SK-N-SH (cell line): ENCODE measurements at regions of chr2 and their contacts with region 1.

Region 1: GRCh38 chr2:10072656-10073480 is 7.3 kb downstream of the CYS1 start:
- DNase-seq: peak; percentile 97
- H3K4me3 ChIP-seq: no peak overlapping the region; a peak in 1 of 4 replicates
- H3K27ac ChIP-seq: no peak overlapping the region
- H3K4me1 ChIP-seq: peaks cover 0 to 2% of the 10 kb centered on the region in 2 experiments; a peak in 1 of 4 replicates
- H3K27me3 ChIP-seq: peaks cover 17% of the 10 kb centered on the region; the same call in 1 of the 2 replicates
- CTCF ChIP-seq: peak; percentile 96
- EP300 ChIP-seq: no peak
- RAD21 ChIP-seq: peak; percentile 91

Region 2: GRCh38 chr2:9821805-9822445 is 250.9 kb before region 1 on chr2:
- CTCF ChIA-PET with region 1: no interaction called
- POLR2A ChIA-PET with region 1: no interaction called
- DNase-seq: no peak
- H3K4me3 ChIP-seq: no peak overlapping the region
- H3K27ac ChIP-seq: no peak overlapping the region
- H3K4me1 ChIP-seq: peaks cover 0 to 2% of the 10 kb centered on the region in 2 experiments; a peak in 1 of 4 replicates
- H3K27me3 ChIP-seq: no peaks in the 10 kb centered on the region
- CTCF ChIP-seq: no peak
- EP300 ChIP-seq: no peak
- RAD21 ChIP-seq: no peak

Region 3: GRCh38 chr2:10003206-10004125 is 69.4 kb before region 1 on chr2:
- CTCF ChIA-PET with region 1: interaction called, 10 read pairs
- POLR2A ChIA-PET with region 1: no interaction called
- DNase-seq: no peak
- H3K4me3 ChIP-seq: no peak overlapping the region
- H3K27ac ChIP-seq: peak overlapping the region in 1 of 2 experiments; percentile 84; a peak in 2 of 4 replicates
- H3K4me1 ChIP-seq: peaks cover 0 to 53% of the 10 kb centered on the region in 2 experiments; a peak in 2 of 4 replicates
- H3K27me3 ChIP-seq: no peaks in the 10 kb centered on the region
- CTCF ChIP-seq: no peak
- EP300 ChIP-seq: no peak
- RAD21 ChIP-seq: no peak

Region 4: GRCh38 chr2:10057231-10058107 is 15.4 kb before region 1 on chr2:
- CTCF ChIA-PET with region 1: interaction called, 125 read pairs
- POLR2A ChIA-PET with region 1: no interaction called
- DNase-seq: peak; percentile 58
- H3K4me3 ChIP-seq: no peak overlapping the region
- H3K27ac ChIP-seq: no peak overlapping the region
- H3K4me1 ChIP-seq: peaks cover 0 to 23% of the 10 kb centered on the region in 2 experiments; a peak in 1 of 4 replicates
- H3K27me3 ChIP-seq: no peaks in the 10 kb centered on the region
- CTCF ChIP-seq: no peak
- EP300 ChIP-seq: no peak
- RAD21 ChIP-seq: no peak

Region 5: DNA sequence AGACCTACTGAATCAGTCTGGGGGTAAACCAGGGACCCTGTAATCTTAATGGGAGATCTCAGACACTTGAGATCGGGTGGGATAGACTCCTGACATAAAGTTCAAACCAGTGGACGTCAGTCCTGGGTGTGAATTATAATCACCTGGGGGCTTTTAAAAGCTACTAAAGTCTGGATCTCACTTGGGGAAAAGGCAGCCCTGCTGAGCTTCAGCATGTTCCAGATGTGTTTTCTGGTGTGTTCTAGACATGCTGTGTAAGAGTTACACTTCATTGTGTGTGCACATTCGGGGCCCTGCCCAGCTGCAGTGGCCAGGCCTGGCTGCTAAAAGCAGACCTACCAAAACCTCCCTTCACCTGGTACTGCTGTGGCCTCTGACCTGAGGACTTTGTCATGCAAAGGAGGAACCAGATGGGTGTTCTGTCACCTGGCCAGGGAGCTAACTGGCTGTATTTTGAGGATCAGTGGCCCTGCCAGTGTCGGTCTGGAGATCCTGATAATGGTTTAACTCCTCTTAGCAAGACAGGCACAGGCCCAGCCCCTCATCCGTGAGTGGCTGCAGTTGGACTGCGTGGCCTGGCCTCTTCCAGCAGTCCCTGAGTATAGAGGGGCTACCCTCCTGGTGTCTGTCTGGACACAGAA is 60.3 kb after region 1 on chr2:
- CTCF ChIA-PET with region 1: interaction called, 26 read pairs
- POLR2A ChIA-PET with region 1: no interaction called
- DNase-seq: no peak
- H3K4me3 ChIP-seq: no peak overlapping the region
- H3K27ac ChIP-seq: peak overlapping the region in 1 of 2 experiments; percentile 18; a peak in 1 of 4 replicates
- H3K4me1 ChIP-seq: peaks cover 0 to 16% of the 10 kb centered on the region in 2 experiments; a peak in 1 of 4 replicates
- H3K27me3 ChIP-seq: no peaks in the 10 kb centered on the region
- CTCF ChIP-seq: no peak
- EP300 ChIP-seq: no peak
- RAD21 ChIP-seq: no peak

Region 6: DNA sequence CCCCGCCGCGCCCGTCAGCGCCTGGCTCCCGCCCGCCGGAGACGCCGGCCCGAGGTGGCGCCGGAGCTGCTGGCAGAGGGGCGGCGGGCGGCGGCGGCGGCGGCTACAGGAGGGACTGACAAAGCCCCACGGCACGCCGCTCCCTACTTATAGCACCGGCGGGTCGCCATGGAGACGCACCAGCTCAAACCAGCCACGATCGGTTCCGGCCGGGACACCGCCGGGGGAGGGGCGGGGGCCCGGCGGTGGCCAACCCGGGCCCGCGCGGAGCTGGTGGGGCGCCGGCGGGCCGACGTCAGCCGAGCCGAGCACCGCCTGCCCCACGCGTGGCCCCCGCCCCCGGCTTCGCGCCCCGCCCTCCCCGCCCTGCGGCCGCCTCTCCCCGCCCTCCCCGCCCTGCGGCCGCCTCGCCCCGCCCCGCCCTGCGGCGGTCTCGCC is 375.4 kb after region 1 on chr2 and contains the start of gene ODC1:
- CTCF ChIA-PET with region 1: interaction called, 373 read pairs
- POLR2A ChIA-PET with region 1: interaction called, 4 read pairs
- DNase-seq: peak; percentile 99
- H3K4me3 ChIP-seq: peak within 1 kb of the TSS; percentile 76 to 88
- H3K27ac ChIP-seq: peak within 1 kb of the TSS; percentile 68 to 89
- H3K4me1 ChIP-seq: peaks cover 28 to 32% of the 10 kb centered on the region in 2 experiments
- H3K27me3 ChIP-seq: no peaks in the 10 kb centered on the region
- CTCF ChIP-seq: no peak
- EP300 ChIP-seq: peak in 1 of 2 experiments; percentile 18; a peak in 1 of 4 replicates
- RAD21 ChIP-seq: no peak
- polyA plus RNA-seq, gene ODC1: 253 and 273 TPM in 2 replicates